ENCODE measurements at regions of chr10 and their contacts with region 1.

Region 1: DNA sequence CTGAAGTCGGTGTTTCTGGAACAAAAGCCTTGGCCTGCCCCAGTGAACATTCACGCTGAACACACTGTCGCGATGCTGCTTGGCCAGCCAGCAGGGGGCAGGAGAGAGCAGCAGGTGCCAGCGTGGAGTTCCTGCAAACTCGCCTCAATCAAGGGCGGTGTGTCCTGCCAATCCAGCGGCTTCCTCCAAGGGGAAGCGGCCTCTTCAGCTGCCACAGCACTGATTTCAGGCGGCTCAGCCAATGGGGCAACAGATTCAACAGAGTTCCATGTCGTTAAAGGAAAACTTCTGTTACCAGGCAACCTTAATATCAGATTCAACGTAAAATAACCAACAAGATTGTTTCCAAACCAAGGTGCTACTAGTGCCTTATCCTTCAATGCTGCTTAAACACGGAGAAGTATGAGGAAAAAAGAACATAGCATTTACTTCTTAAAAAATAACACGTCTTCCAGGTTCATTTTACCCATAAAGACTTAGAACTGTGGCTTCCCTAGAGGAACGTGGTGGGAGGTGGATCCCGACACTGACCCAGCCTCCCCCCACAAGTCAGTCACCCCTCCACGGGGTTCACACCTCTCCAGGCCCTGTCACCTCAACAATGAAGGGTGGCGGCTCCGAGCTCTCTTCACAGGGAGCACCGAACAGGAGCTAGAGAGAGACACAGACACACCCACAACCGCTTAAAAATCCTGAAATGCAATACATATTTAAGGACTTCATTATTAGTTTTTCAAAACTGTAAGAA is 178.2 kb downstream of the DIP2C start:
- DNase-seq: peak; percentile 90 to 99 (median 95)

Region 2: DNA sequence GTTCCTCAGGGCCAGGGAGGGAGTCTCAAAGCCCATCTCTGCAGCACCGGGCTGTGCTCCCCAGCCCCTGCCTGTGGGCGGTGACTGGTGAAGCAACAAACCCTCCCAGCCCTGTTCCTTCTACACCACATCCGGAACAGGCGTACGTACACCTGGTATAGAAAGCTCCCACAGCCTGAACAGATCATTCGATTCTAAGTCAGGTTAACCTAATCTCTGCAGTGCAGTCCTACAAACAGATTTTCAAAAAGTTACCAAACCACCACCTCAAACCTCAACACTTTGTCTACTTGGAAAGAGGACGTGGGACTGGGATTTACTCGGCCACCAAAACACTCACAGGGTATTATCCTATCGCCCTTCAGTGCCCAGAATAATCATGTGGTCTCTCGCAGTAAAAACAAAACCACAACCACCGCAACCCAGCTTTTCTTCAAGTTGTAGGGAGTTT is 60.2 kb before region 1 on chr10:
- intact Hi-C with region 1: loop called (anchors 10 kb)
- DNase-seq: no peak

Region 3: DNA sequence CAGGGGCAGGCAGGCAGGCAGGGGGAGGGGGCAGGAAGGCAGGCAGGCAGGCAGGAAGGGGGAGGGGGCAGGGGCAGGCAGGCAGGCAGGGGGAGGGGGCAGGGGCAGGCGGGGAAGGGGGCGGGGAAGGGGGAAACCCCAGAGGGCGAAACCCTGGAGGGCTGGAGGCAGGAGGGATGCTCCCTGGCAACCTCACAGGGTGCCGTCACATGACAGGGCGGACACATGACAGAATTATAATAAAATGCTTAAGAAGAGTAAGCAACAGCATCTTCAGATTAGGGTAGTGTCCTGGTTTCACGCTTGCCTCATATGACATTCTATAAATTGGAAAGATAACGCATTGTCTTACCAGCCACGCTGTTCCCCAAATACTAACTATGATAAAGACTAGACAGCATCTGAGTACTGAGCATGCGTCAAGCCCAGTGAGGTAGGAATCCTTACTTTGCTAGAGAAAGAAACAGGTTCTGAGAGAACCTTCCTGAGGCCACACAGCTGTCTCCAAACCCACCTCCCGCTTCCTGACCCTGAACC is 46.6 kb after region 1 on chr10:
- intact Hi-C with region 1: no loop called
- DNase-seq: no peak

Region 4: GRCh38 chr10:613271-614138 is 102.2 kb after region 1 on chr10:
- intact Hi-C with region 1: loop called (anchors 5 kb)
- DNase-seq: peak in 2 of 10 donors; percentile 77 to 78

Region 5: DNA sequence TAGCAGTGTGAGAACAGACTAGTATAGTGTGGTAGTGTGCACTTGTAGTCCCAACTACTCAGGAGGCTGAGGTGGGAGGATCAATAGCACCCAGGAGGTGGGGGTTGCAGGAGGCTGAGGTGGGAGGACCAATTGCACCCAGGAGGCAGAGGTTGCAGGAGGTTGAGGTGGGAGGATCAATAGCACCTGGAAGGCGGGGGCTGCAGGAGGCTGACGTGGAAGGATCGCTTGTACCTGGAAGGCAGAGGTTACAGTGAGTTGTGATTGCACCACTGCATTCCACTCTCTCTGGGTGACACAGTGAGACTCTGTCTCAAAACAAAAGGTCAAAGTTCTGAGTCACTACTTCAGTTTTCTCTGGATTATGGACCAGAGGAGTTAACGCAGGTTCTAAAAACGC is 200.8 kb after region 1 on chr10:
- intact Hi-C with region 1: no loop called
- DNase-seq: no peak

Region 6: GRCh38 chr10:784403-785088 is 273.3 kb after region 1 on chr10:
- intact Hi-C with region 1: loop called (anchors 1 kb)
- DNase-seq: peak; percentile 45 to 97 (median 82)